ENCODE measurements at regions of chr2 and their contacts with region 1.

Region 1: DNA sequence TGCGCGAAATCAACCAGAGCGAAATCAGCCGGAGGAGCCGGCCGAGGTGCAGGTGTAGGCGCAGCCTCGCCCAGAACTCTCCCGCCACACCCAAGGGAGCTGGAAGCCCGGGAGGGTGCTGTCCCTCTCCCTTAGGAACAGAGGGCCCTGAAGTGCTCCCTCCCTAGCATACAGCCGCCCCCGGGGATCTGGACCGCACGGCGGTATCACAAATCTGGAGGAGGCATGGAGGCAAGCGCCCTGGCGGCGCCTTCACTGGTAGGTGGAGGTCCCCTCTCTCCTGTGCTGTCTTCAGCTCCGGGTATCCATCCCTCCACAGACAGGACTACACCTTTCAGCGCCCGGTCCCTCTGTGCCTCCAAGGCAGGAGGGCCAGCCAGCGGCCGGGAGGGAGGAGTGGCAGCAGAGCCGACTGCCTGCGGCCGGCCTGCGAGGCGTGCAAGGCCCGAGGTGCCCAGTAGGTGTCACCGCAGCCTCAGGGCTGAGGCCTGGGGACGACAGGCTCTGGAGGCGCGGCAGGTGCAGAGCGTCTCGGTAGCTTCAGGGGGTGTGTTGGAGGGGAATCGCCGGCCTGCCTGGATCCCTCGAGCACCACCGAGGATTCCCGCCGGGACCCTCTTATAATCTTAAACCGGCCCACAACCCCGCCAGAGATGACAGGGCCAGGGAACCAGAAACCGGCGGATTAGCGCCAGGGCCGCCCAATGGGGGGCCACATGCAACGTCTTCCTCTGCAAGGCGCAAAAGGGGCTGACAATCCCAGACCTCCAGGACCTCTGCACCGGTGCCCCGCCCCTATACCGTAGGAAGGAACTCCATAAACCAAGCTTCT is 2.8 kb downstream of the IHH start:
- DNase-seq: peak; percentile 74 to 87
- ATAC-seq: peak; percentile 90 to 98 (median 95)
- H3K4me3 ChIP-seq: no peak overlapping the region
- H3K4me3 Mint-ChIP-seq: peak overlapping the region; percentile 55
- H3K27ac ChIP-seq: no peak overlapping the region
- H3K27ac Mint-ChIP-seq: no peak overlapping the region
- H3K4me1 ChIP-seq: peaks cover 32% of the 10 kb centered on the region
- H3K4me1 Mint-ChIP-seq: peaks cover 0 to 22% of the 10 kb centered on the region in 2 donors
- H3K27me3 ChIP-seq: peaks cover 55% of the 10 kb centered on the region
- H3K27me3 Mint-ChIP-seq: peaks cover 48 to 53% of the 10 kb centered on the region in 2 donors
- CTCF ChIP-seq: peak; percentile 81

Region 2: DNA sequence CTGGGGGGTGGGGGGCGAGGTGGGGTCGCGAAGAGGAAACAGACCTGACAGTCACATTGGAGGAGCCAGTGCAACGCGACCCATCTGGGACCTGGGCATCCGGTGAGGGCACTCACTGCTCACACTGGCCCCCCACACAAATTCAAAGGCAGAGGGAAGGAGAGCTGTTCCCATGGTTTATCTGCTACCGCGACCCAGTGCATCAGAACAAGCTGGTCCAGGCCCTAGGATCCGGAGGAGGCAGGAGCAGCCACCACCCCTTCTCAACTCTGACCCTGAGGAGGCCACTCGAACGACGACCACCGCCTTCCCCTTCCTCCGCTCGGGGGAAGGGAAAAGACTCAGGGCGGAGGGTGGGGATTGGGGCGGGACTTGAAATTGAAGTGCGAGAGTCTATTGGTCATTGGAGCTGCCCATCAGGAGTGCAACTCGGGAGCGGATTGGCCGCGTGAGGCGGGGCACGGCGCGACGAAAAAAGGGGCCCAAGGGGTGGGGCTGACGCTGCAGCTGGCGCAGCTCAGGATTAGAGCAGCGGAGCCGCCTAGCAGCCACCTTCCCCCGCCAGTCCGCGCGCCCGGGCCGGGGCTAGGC is 98.7 kb before region 1 on chr2 and contains the start of gene CDK5R2:
- intact Hi-C with region 1: no loop called
- DNase-seq: peak in 1 of 2 donors; percentile 76
- ATAC-seq: peak; percentile 58 to 80 (median 60)
- H3K4me3 ChIP-seq: no peak within 1 kb of the TSS
- H3K4me3 Mint-ChIP-seq: peak within 1 kb of the TSS; percentile 57
- H3K27ac ChIP-seq: no peak within 1 kb of the TSS
- H3K27ac Mint-ChIP-seq: no peak within 1 kb of the TSS
- H3K4me1 ChIP-seq: peaks cover 19% of the 10 kb centered on the region
- H3K4me1 Mint-ChIP-seq: peaks cover 0 to 18% of the 10 kb centered on the region in 2 donors
- H3K27me3 ChIP-seq: peaks cover 46% of the 10 kb centered on the region
- H3K27me3 Mint-ChIP-seq: peaks cover 61 to 74% of the 10 kb centered on the region in 2 donors
- CTCF ChIP-seq: no peak
- total RNA-seq, gene CDK5R2: not detected

Region 3: GRCh38 chr2:219087361-219087760 is 29.4 kb after region 1 on chr2:
- intact Hi-C with region 1: no loop called
- DNase-seq: no peak
- ATAC-seq: no peak
- H3K4me3 ChIP-seq: no peak overlapping the region
- H3K4me3 Mint-ChIP-seq: no peak overlapping the region
- H3K27ac ChIP-seq: no peak overlapping the region
- H3K27ac Mint-ChIP-seq: no peak overlapping the region
- H3K4me1 ChIP-seq: no peaks in the 10 kb centered on the region
- H3K4me1 Mint-ChIP-seq: peaks cover 12 to 23% of the 10 kb centered on the region in 2 donors
- H3K27me3 ChIP-seq: no peaks in the 10 kb centered on the region
- H3K27me3 Mint-ChIP-seq: no peaks in the 10 kb centered on the region
- CTCF ChIP-seq: no peak

Region 4: DNA sequence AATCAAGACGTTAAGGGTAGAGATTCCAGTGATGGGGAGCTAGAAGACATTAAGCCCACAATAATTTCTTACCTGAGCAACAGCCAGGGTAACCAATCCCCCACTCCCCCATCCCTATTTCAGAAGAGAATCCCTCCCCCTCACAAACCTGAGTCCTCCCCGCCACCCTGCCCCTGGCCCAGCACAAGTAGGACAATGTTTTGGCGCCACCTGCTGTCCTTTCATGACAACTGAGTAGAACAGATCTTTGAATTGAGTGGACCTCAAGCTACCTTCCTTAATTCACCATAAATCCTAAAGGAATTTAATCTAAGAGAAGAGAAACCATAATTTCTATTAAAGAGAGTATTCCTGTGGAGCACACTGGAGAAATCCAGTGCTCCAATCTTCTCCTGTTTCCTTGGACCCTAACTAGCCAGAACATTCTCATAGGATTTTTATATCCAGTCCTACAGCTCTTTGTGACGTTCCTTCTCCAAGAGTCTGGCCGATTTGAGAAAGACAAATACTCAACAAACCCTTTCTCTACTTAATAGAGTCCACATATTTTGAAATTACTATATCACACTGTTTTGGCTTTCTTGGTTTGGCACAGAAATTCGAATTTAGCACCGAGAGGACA is 61.6 kb after region 1 on chr2:
- intact Hi-C with region 1: loop called (anchors 1 kb)
- DNase-seq: peak; percentile 35 to 77
- ATAC-seq: peak in 2 of 3 donors; percentile 43 to 56
- H3K4me3 ChIP-seq: no peak overlapping the region
- H3K4me3 Mint-ChIP-seq: no peak overlapping the region
- H3K27ac ChIP-seq: no peak overlapping the region
- H3K27ac Mint-ChIP-seq: no peak overlapping the region
- H3K4me1 ChIP-seq: peaks cover 11% of the 10 kb centered on the region
- H3K4me1 Mint-ChIP-seq: peaks cover 19 to 24% of the 10 kb centered on the region in 2 donors
- H3K27me3 ChIP-seq: no peaks in the 10 kb centered on the region
- H3K27me3 Mint-ChIP-seq: no peaks in the 10 kb centered on the region
- CTCF ChIP-seq: peak; percentile 72

Region 5: GRCh38 chr2:219155054-219155644 is 97.2 kb after region 1 on chr2:
- intact Hi-C with region 1: loop called (anchors 1 kb)
- DNase-seq: peak in 1 of 2 donors; percentile 86
- ATAC-seq: peak in 2 of 3 donors; percentile 36 to 43
- H3K4me3 ChIP-seq: no peak overlapping the region
- H3K4me3 Mint-ChIP-seq: no peak overlapping the region
- H3K27ac ChIP-seq: no peak overlapping the region
- H3K27ac Mint-ChIP-seq: no peak overlapping the region
- H3K4me1 ChIP-seq: peaks cover 6% of the 10 kb centered on the region
- H3K4me1 Mint-ChIP-seq: peaks cover 5 to 17% of the 10 kb centered on the region in 2 donors
- H3K27me3 ChIP-seq: no peaks in the 10 kb centered on the region
- H3K27me3 Mint-ChIP-seq: no peaks in the 10 kb centered on the region
- CTCF ChIP-seq: peak; percentile 86

Region 6: DNA sequence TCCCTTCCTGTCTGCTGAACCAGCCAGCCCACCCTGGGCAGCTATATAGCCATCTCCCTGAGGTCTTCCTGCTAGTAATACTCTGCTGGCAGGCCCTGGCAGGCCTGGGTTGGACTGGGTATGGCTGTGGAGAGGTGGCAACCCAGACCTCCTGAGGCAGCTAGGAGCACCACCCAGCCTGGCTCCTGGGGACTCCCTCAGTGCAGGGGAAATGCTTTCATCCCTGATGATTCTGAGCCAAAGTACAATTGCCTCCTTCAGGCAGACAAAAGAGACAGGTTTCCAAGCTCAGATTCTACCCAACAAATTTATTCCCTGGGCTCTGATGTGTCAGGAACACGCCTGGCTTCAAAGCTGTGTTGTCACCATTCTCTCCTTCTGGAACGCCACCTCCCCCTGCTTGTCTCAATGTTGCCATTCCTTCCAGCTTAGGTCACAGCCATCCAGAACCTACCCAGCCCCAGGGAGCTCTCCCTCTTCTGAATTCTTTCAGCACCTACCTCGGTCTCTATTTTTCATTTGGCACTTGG is 216.5 kb after region 1 on chr2:
- intact Hi-C with region 1: no loop called
- DNase-seq: no peak
- ATAC-seq: no peak
- H3K4me3 ChIP-seq: no peak overlapping the region
- H3K4me3 Mint-ChIP-seq: no peak overlapping the region
- H3K27ac ChIP-seq: no peak overlapping the region
- H3K27ac Mint-ChIP-seq: no peak overlapping the region
- H3K4me1 ChIP-seq: peaks cover 17% of the 10 kb centered on the region
- H3K4me1 Mint-ChIP-seq: peaks cover 19 to 20% of the 10 kb centered on the region in 2 donors
- H3K27me3 ChIP-seq: no peaks in the 10 kb centered on the region
- H3K27me3 Mint-ChIP-seq: peaks cover 0 to 5% of the 10 kb centered on the region in 2 donors
- CTCF ChIP-seq: no peak

Region 7: DNA sequence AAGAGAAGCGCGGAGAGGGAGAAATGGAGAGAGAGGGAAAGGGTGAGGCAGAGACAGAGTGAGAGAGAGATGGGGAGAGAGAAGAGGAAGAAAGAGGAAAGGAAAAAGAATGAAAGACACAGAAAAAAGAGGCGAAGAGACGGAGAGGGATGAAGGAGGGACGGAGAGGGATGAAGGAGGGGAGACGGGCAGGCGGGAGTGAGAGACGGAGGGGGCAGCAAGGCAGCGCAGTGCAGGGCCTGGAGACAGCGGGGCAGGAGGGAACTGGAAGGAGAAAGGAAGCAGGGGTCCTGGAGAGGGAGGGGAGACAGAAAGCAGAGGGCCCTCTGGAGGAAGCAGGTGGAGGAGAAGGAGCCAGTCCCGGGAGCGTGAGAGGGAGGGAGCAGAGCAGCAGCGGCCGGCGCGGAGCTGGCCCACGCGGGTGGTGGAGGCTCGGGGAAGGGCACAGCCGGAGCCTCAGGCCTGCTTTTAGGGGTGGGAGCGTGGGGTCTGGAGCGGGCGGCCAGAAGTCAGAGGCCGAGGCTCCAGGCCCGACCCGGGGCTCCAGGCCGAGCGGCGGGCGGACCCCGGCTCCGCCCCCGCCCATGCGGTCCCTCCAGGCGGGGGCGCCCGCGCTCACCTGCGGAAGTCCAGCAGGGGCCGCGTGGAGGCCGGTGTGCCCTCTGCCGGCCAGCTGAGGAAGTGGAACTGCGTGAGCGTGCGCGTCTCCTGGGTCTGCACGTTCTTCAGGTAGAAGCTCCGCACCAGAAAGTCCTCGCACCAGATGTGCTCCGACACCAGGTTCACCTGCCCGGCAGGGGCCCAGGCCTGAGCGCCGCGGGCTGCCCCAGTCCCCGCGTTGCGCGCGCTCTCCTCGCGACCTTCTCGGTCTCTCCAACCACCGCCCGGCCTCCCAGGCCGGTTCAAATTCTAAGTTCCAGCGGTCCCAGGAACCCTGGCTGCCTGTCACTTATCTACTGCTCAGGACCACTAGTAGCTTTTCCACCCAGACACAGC is 236.7 kb after region 1 on chr2:
- intact Hi-C with region 1: loop called (anchors 1 kb)
- DNase-seq: peak; percentile 88 to 96
- ATAC-seq: peak; percentile 95 to 97 (median 95)
- H3K4me3 ChIP-seq: peak overlapping the region; percentile 45
- H3K4me3 Mint-ChIP-seq: peak overlapping the region; percentile 73
- H3K27ac ChIP-seq: peak overlapping the region; percentile 69
- H3K27ac Mint-ChIP-seq: peak overlapping the region; percentile 78 to 80
- H3K4me1 ChIP-seq: peaks cover 14% of the 10 kb centered on the region
- H3K4me1 Mint-ChIP-seq: peaks cover 6 to 17% of the 10 kb centered on the region in 2 donors
- H3K27me3 ChIP-seq: peaks cover 7% of the 10 kb centered on the region
- H3K27me3 Mint-ChIP-seq: peaks cover 0 to 4% of the 10 kb centered on the region in 2 donors
- CTCF ChIP-seq: peak; percentile 99

Region 8: DNA sequence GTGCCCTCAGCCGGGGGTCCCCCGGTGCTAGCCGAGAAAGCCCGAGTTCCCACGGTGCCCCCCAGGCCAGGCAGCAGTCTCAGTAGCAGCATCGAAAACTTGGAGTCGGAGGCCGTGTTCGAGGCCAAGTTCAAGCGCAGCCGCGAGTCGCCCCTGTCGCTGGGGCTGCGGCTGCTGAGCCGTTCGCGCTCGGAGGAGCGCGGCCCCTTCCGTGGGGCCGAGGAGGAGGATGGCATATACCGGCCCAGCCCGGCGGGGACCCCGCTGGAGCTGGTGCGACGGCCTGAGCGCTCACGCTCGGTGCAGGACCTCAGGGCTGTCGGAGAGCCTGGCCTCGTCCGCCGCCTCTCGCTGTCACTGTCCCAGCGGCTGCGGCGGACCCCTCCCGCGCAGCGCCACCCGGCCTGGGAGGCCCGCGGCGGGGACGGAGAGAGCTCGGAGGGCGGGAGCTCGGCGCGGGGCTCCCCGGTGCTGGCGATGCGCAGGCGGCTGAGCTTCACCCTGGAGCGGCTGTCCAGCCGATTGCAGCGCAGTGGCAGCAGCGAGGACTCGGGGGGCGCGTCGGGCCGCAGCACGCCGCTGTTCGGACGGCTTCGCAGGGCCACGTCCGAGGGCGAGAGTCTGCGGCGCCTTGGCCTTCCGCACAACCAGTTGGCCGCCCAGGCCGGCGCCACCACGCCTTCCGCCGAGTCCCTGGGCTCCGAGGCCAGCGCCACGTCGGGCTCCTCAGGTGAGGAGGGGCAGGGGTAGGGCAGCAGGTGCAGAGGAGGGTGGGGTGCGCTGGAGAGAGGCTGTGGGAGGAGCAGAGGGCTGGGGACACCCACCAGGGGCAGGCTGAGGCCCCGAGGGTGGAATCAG is 426.6 kb after region 1 on chr2:
- intact Hi-C with region 1: no loop called
- DNase-seq: peak in 1 of 2 donors; percentile 32
- ATAC-seq: peak in 1 of 3 donors; percentile 52
- H3K4me3 ChIP-seq: no peak overlapping the region
- H3K4me3 Mint-ChIP-seq: peak overlapping the region; percentile 49
- H3K27ac ChIP-seq: no peak overlapping the region
- H3K27ac Mint-ChIP-seq: no peak overlapping the region
- H3K4me1 ChIP-seq: peaks cover 5% of the 10 kb centered on the region
- H3K4me1 Mint-ChIP-seq: peaks cover 0 to 8% of the 10 kb centered on the region in 2 donors
- H3K27me3 ChIP-seq: peaks cover 19% of the 10 kb centered on the region
- H3K27me3 Mint-ChIP-seq: peaks cover 28 to 47% of the 10 kb centered on the region in 2 donors
- CTCF ChIP-seq: no peak